GM12878 (cell line): ENCODE measurements at regions of chr2 and their contacts with region 1.

Region 1: GRCh38 chr2:222318026-222318711 is 19.4 kb upstream of the PAX3 start:
- DNase-seq: no peak
- ATAC-seq: peak; percentile 82
- H3K4me3 ChIP-seq: peak overlapping the region; percentile 74
- H3K27ac ChIP-seq: no peak overlapping the region
- H3K4me1 ChIP-seq: no peaks in the 10 kb centered on the region
- H3K27me3 ChIP-seq: peaks cover 0 to 2% of the 10 kb centered on the region in 2 experiments; a peak in 2 of 4 replicates
- CTCF ChIP-seq: peak; percentile 35 to 80 (median 66); a peak in 5 of 6 replicates
- EP300 ChIP-seq: no peak
- POLR2A ChIP-seq: no peak
- RAD21 ChIP-seq: peak; percentile 87

Region 2: DNA sequence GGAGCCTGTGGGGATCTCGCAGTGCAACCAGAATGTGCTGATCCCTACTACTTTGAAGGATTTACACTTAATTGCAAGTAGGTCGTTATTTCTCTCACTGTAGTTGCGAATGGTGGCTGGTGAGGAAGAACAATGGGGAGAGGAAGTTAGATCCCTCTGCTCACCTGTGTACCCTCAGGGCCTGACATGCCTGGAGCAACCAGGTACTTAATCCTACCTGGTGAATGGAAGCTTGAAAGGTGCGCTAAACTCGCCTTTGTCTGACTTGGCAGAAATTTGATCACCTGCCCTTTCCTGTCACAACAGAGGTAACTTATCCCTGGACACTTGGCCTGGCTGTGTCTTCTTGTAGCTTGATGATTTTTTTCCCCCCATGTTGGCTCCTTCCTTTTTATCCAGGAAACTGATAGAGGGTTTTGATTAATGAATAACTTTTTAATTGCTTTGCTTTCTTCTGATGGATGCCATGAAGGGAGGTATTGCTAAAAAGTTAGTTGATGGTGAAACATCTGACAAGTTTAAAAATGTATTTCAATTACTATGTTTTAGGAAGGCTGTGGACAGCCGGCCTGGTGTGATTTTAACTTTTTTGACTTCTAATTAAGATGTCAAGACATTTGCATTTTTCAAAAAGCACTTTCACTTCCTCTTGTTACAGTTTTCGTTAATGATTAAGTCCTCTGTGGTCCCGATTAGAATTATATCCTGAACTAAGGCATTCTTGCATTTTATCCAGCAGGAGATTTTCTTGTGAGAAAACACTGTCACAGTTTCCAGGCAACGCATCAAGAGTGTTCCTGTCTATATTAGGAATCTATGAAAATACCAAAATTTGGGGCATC is 115.4 kb after region 1 on chr2:
- CTCF ChIA-PET with region 1: interaction called, 24 read pairs
- POLR2A ChIA-PET with region 1: interaction called, 4 read pairs
- RAD21 ChIA-PET with region 1: interaction called, 7 read pairs
- SMC1A ChIA-PET with region 1: interaction called, 10 read pairs
- in situ Hi-C with region 1: loop called (anchors 5 kb)
- intact Hi-C with region 1: loop called (anchors 2 kb)
- DNase-seq: no peak
- ATAC-seq: peak; percentile 77
- H3K4me3 ChIP-seq: peak overlapping the region; percentile 37; the same call in 1 of the 2 replicates
- H3K27ac ChIP-seq: peak overlapping the region; percentile 65
- H3K4me1 ChIP-seq: peaks cover 33% of the 10 kb centered on the region
- H3K27me3 ChIP-seq: no peaks in the 10 kb centered on the region
- CTCF ChIP-seq: no peak
- EP300 ChIP-seq: peak; percentile 46 to 81; a peak in 2 of 4 replicates
- POLR2A ChIP-seq: no peak
- RAD21 ChIP-seq: no peak

Region 3: GRCh38 chr2:222504719-222505118 is 186.6 kb after region 1 on chr2:
- CTCF ChIA-PET with region 1: interaction called, 10 read pairs
- POLR2A ChIA-PET with region 1: no interaction called
- RAD21 ChIA-PET with region 1: interaction called, 8 read pairs
- SMC1A ChIA-PET with region 1: interaction called, 7 read pairs
- in situ Hi-C with region 1: no loop called
- intact Hi-C with region 1: no loop called
- DNase-seq: peak; percentile 36
- ATAC-seq: peak; percentile 99
- H3K4me3 ChIP-seq: 0 out of 2 replicates have a peak overlapping the region, but pooled peaks have one; percentile 4
- H3K27ac ChIP-seq: no peak overlapping the region; the same call in 1 of the 2 replicates
- H3K4me1 ChIP-seq: peaks cover 5% of the 10 kb centered on the region
- H3K27me3 ChIP-seq: no peaks in the 10 kb centered on the region
- CTCF ChIP-seq: no peak
- EP300 ChIP-seq: no peak
- POLR2A ChIP-seq: no peak
- RAD21 ChIP-seq: no peak

Region 4: DNA sequence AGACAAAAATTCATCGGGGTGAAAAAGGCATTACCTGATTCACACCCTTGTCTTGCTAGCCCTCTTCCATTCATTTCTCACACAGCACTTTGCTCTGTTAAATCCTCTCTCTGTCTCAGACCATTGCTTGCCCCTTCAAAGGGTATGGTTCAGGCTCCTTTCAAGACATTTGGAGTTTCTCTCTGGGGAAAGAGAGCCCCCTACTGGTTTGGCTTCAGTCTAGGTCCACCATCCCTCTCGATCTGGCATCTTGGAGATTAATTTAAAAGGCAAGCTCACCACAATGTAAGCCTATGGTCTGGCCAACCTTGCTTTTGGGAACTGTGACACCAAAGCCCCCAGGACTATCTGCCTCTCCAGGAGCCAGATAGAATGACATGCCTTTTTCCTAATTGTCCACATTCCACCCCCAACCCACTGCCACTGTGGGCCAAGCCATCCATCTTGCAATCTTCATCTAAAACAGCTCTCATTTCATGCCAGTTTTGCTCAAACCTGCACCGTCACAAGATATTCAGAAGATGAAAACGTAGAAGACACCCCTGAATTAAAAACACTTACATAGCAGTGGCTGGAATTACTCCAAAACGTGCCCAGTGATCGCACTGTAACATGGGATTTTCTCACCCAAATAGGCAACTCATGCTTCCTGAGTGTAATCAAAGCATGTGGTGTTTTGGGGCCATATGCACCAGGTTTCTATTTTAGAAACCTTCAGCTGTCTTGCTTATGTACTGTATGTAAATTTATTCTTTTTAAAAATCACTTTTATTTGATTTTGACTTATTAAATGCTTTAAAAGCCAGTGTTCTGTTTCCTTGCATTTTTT is 243.9 kb after region 1 on chr2:
- CTCF ChIA-PET with region 1: interaction called, 164 read pairs
- POLR2A ChIA-PET with region 1: interaction called, 4 read pairs
- RAD21 ChIA-PET with region 1: interaction called, 91 read pairs
- SMC1A ChIA-PET with region 1: interaction called, 116 read pairs
- in situ Hi-C with region 1: loop called (anchors 5 kb)
- intact Hi-C with region 1: loop called (anchors 1 kb)
- DNase-seq: peak; percentile 13
- ATAC-seq: peak; percentile 90
- H3K4me3 ChIP-seq: no peak overlapping the region
- H3K27ac ChIP-seq: no peak overlapping the region
- H3K4me1 ChIP-seq: no peaks in the 10 kb centered on the region
- H3K27me3 ChIP-seq: no peaks in the 10 kb centered on the region
- CTCF ChIP-seq: peak; percentile 77 to 80 (median 79)
- EP300 ChIP-seq: no peak
- POLR2A ChIP-seq: no peak
- RAD21 ChIP-seq: peak; percentile 91

Region 5: GRCh38 chr2:222594679-222595078 is 276.5 kb after region 1 on chr2:
- CTCF ChIA-PET with region 1: interaction called, 23 read pairs
- POLR2A ChIA-PET with region 1: no interaction called
- RAD21 ChIA-PET with region 1: interaction called, 7 read pairs
- SMC1A ChIA-PET with region 1: interaction called, 11 read pairs
- in situ Hi-C with region 1: no loop called
- intact Hi-C with region 1: no loop called
- DNase-seq: no peak
- ATAC-seq: no peak
- H3K4me3 ChIP-seq: no peak overlapping the region
- H3K27ac ChIP-seq: no peak overlapping the region
- H3K4me1 ChIP-seq: no peaks in the 10 kb centered on the region
- H3K27me3 ChIP-seq: no peaks in the 10 kb centered on the region
- CTCF ChIP-seq: no peak
- EP300 ChIP-seq: no peak
- POLR2A ChIP-seq: no peak
- RAD21 ChIP-seq: no peak

Region 6: DNA sequence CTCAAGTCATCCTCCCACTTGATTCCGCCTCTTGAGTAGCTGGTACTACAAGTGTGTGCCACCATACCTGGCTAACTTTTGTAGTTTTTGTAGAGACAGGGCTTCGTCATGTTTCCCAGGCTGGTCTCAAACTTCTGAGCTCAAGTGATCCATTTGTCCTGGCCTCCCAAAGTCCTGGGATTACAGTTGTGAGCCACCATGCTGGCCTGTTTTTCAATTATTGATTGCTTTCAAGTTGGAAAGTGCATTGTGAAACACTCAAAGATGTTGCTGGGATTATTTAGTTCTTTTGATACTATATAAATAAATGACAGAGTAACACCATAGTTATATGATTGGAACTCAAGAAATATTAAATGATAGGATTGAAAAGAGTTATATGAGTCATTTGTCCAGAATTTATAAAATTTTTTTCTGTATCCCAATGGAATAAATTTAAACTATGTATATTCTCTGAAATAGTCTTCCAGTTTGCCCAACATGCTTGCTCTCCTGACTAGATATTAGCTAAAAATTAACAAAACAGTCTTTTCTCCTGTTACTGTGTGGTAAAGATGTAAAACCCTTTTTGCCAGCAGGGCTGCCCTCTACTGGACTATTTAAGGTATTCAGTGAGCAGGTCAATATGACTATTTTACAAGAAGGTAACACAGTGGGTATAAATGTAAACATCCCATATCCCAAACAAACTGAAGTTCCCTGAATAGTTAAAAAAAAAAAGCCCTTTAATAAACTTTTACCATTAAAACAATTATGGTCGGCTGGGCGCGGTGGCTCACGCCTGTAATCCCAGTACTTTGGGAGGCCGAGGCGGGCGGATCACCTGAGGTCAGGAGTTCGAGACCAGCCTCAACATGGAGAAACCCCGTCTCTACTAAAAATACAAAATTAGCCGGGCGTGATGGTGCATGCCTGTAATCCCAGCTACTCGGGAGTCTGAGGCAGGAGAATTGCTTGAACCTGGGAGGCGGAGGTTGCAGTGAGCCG is 585.4 kb after region 1 on chr2:
- CTCF ChIA-PET with region 1: no interaction called
- POLR2A ChIA-PET with region 1: no interaction called
- RAD21 ChIA-PET with region 1: no interaction called
- SMC1A ChIA-PET with region 1: no interaction called
- in situ Hi-C with region 1: loop called (anchors 25 kb)
- intact Hi-C with region 1: no loop called
- DNase-seq: no peak
- ATAC-seq: peak; percentile 95
- H3K4me3 ChIP-seq: no peak overlapping the region
- H3K27ac ChIP-seq: no peak overlapping the region
- H3K4me1 ChIP-seq: no peaks in the 10 kb centered on the region
- H3K27me3 ChIP-seq: no peaks in the 10 kb centered on the region
- CTCF ChIP-seq: peak; percentile 62 to 77 (median 66); a peak in 5 of 6 replicates
- EP300 ChIP-seq: no peak
- POLR2A ChIP-seq: no peak
- RAD21 ChIP-seq: peak; percentile 95